Naive thymus-derived CD4-positive, alpha-beta T cell (primary cell): ENCODE measurements at regions of chr16 and their contacts with region 1.

Region 1: GRCh38 chr16:23435500-23435899 is 17.5 kb downstream of the COG7 start:
- DNase-seq: peak; percentile 5 to 60 (median 48)
- ATAC-seq: peak; percentile 89
- H3K4me3 ChIP-seq: no peak overlapping the region
- H3K4me3 Mint-ChIP-seq: no peak overlapping the region
- H3K27ac ChIP-seq: no peak overlapping the region
- H3K27ac Mint-ChIP-seq: peak overlapping the region in 1 of 9 donors; percentile 53
- H3K4me1 ChIP-seq: no peaks in the 10 kb centered on the region
- H3K4me1 Mint-ChIP-seq: peaks cover 0 to 4% (median 0%) of the 10 kb centered on the region in 7 donors
- H3K27me3 ChIP-seq: no peaks in the 10 kb centered on the region
- H3K27me3 Mint-ChIP-seq: no peaks in the 10 kb centered on the region

Region 2: GRCh38 chr16:23182460-23183309 is 252.8 kb before region 1 on chr16 and contains the start of gene SCNN1G:
- CTCF ChIA-PET with region 1: interaction called, 8 read pairs
- POLR2A ChIA-PET with region 1: no interaction called
- intact Hi-C with region 1: loop called in 1 of 2 experiments (anchors 1 kb)
- DNase-seq: peak; percentile 45 to 78 (median 63)
- ATAC-seq: peak; percentile 98
- H3K4me3 ChIP-seq: no peak within 1 kb of the TSS
- H3K4me3 Mint-ChIP-seq: peak within 1 kb of the TSS; percentile 46 to 84 (median 68)
- H3K27ac ChIP-seq: no peak within 1 kb of the TSS
- H3K27ac Mint-ChIP-seq: peak within 1 kb of the TSS in 1 of 9 donors; percentile 51
- H3K4me1 ChIP-seq: peaks cover 0 to 5% of the 10 kb centered on the region in 2 donors
- H3K4me1 Mint-ChIP-seq: peaks cover 8 to 15% (median 10%) of the 10 kb centered on the region in 7 donors
- H3K27me3 ChIP-seq: peaks cover 0 to 19% of the 10 kb centered on the region in 2 donors
- H3K27me3 Mint-ChIP-seq: peaks cover 47 to 78% (median 72%) of the 10 kb centered on the region in 5 donors
- total RNA-seq, gene SCNN1G: not detected

Region 3: GRCh38 chr16:23595951-23596720 is 160.6 kb after region 1 on chr16 and contains the start of gene NDUFAB1:
- CTCF ChIA-PET with region 1: no interaction called
- POLR2A ChIA-PET with region 1: no interaction called
- intact Hi-C with region 1: no loop called
- DNase-seq: peak; percentile 82 to 97 (median 89)
- ATAC-seq: peak; percentile 100
- H3K4me3 ChIP-seq: peak within 1 kb of the TSS; percentile 82
- H3K4me3 Mint-ChIP-seq: peak within 1 kb of the TSS; percentile 74 to 89 (median 84)
- H3K27ac ChIP-seq: peak within 1 kb of the TSS; percentile 94
- H3K27ac Mint-ChIP-seq: peak within 1 kb of the TSS; percentile 65 to 89 (median 83)
- H3K4me1 ChIP-seq: peaks cover 5 to 13% of the 10 kb centered on the region in 2 donors
- H3K4me1 Mint-ChIP-seq: peaks cover 17 to 48% (median 29%) of the 10 kb centered on the region in 7 donors
- H3K27me3 ChIP-seq: no peaks in the 10 kb centered on the region
- H3K27me3 Mint-ChIP-seq: no peaks in the 10 kb centered on the region
- total RNA-seq, gene NDUFAB1: 24.2 to 85.3 (median 38.2) TPM